ENCODE measurements at regions of chr2 and their contacts with region 1.

Region 1: GRCh38 chr2:105248316-105249070 is 7.0 kb downstream of the GPR45 start:
- DNase-seq: no peak
- H3K4me3 Mint-ChIP-seq: no peak overlapping the region
- H3K27ac Mint-ChIP-seq: no peak overlapping the region
- H3K4me1 Mint-ChIP-seq: no peaks in the 10 kb centered on the region
- H3K27me3 Mint-ChIP-seq: no peaks in the 10 kb centered on the region

Region 2: DNA sequence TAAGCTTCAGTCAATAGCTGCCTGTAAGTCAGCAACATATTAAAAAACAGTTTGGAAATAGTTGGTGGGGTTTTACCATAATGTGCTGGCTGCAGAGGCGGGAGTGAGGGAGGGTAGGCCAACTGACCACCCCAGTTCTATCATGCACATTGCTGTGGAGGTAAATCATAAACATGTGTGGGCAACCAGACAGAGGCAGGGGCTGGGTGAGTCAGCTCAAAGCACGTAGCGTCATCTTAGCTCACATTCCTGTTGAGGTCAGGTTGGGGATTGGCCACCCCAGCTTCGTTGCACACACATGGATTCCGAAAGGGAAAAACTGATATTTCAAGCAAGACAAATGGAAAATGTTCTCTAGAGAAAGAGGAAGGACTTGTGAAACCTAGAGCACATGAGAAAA is 12.6 kb after region 1 on chr2:
- intact Hi-C with region 1: loop called (anchors 1 kb)
- DNase-seq: no peak
- H3K4me3 Mint-ChIP-seq: no peak overlapping the region
- H3K27ac Mint-ChIP-seq: no peak overlapping the region
- H3K4me1 Mint-ChIP-seq: peaks cover 3% of the 10 kb centered on the region
- H3K27me3 Mint-ChIP-seq: peaks cover 2% of the 10 kb centered on the region

Measured in activated CD4-positive, alpha-beta T cell treated with anti-CD3 and anti-CD28 coated beads, Interleukin-2, amount 10 ng/mL, durations not matched to agents 24 days and 14 days (primary cell).